Panc1 (cell line): ENCODE measurements at regions of chr2 and their contacts with region 1.

Region 1: GRCh38 chr2:29596584-29596983 is 324.8 kb downstream of the ALK start:
- DNase-seq: no peak
- ATAC-seq: no peak
- H3K4me3 ChIP-seq: no peak overlapping the region
- H3K27ac ChIP-seq: no peak overlapping the region
- H3K4me1 ChIP-seq: no peaks in the 10 kb centered on the region
- H3K27me3 ChIP-seq: peaks cover 2% of the 10 kb centered on the region; the same call in 1 of the 2 replicates
- CTCF ChIP-seq: no peak

Region 2: DNA sequence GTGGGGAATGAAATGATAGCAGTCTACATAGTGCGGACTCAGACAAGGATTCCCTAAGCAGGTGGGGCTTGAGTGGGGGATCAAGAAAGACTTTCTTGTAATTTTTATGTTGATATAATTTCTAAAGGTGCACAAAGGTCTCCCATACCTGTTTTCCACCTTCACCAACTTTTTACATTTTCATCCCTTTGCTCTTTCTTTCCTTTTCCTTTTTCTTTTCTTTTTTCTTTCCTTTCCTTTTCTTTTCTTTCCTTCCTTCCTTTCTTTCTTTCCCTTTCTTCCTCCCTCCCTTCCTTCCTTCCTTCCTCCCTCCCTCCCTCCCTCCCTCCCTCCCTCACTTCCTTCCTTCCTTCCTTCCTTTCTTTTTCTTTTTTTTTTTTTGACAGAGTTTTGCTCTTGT is 716.4 kb before region 1 on chr2:
- CTCF ChIA-PET with region 1: no interaction called
- POLR2A ChIA-PET with region 1: interaction called, 14 read pairs
- in situ Hi-C with region 1: no loop called
- intact Hi-C with region 1: no loop called
- DNase-seq: no peak
- ATAC-seq: no peak
- H3K4me3 ChIP-seq: no peak overlapping the region
- H3K27ac ChIP-seq: no peak overlapping the region
- H3K4me1 ChIP-seq: no peaks in the 10 kb centered on the region
- H3K27me3 ChIP-seq: peaks cover 10% of the 10 kb centered on the region; the same call in 1 of the 2 replicates
- CTCF ChIP-seq: no peak

Region 3: GRCh38 chr2:29576231-29576630 is 20.4 kb before region 1 on chr2:
- CTCF ChIA-PET with region 1: no interaction called
- POLR2A ChIA-PET with region 1: interaction called, 16 read pairs
- in situ Hi-C with region 1: no loop called
- intact Hi-C with region 1: no loop called
- DNase-seq: no peak
- ATAC-seq: no peak
- H3K4me3 ChIP-seq: no peak overlapping the region
- H3K27ac ChIP-seq: no peak overlapping the region
- H3K4me1 ChIP-seq: no peaks in the 10 kb centered on the region
- H3K27me3 ChIP-seq: peaks cover 10% of the 10 kb centered on the region
- CTCF ChIP-seq: no peak